GM10248 (cell line): ENCODE measurements at regions of chr17 and their contacts with region 1.

Region 1: GRCh38 chr17:7561028-7561575 is 617 bp upstream of the SENP3 start:
- DNase-seq: peak; percentile 90
- CTCF ChIP-seq: peak; percentile 86

Region 2: GRCh38 chr17:7363311-7363710 is 197.8 kb before region 1 on chr17:
- CTCF ChIA-PET with region 1: interaction called, 14 read pairs
- POLR2A ChIA-PET with region 1: no interaction called
- DNase-seq: no peak
- CTCF ChIP-seq: no peak

Region 3: GRCh38 chr17:7465597-7466275 is 95.4 kb before region 1 on chr17:
- CTCF ChIA-PET with region 1: no interaction called
- POLR2A ChIA-PET with region 1: no interaction called
- DNase-seq: no peak
- CTCF ChIP-seq: no peak

Region 4: GRCh38 chr17:7475764-7476422 is 85.2 kb before region 1 on chr17:
- CTCF ChIA-PET with region 1: interaction called, 11 read pairs
- POLR2A ChIA-PET with region 1: no interaction called
- DNase-seq: no peak
- CTCF ChIP-seq: no peak

Region 5: GRCh38 chr17:7509937-7510336 is 51.2 kb before region 1 on chr17:
- CTCF ChIA-PET with region 1: interaction called, 74 read pairs
- POLR2A ChIA-PET with region 1: no interaction called
- DNase-seq: no peak
- CTCF ChIP-seq: no peak

Region 6: DNA sequence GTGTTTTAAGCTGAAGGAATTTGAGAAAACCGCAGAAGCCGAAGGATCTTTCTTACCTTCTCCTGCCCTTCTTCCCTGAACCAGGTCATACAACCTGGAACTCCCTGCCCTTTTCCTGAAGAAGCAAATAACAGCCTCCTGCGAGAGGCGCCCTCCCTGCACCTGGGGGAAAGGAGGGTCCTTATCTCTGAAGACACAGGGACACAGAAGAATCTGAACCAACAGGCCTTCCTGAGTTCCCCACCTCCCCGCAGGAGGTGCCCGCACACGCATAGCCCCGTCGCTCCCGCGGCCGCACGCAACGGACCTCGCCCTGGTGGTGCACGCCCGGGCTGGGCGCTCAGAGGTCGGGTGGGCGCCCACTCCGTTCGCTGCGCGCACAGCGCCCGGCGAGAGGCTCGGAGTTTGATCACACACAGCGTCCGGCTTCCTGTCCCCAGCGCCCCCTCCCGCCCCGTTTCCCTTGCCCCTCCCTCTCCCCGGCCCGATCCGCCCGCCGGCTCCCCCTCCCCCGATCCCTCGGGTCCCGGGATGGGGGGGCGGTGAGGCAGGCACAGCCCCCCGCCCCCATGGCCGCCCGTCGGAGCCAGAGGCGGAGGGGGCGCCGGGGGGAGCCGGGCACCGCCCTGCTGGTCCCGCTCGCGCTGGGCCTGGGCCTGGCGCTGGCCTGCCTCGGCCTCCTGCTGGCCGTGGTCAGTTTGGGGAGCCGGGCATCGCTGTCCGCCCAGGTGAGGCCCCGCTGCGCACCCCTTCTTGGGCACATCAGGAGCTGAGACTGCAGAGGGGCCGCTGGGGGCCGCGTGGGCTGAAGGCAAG is 12.3 kb before region 1 on chr17 and contains the start of gene TNFSF12:
- CTCF ChIA-PET with region 1: interaction called, 43 read pairs
- POLR2A ChIA-PET with region 1: no interaction called
- DNase-seq: peak; percentile 76
- CTCF ChIP-seq: no peak

Region 7: DNA sequence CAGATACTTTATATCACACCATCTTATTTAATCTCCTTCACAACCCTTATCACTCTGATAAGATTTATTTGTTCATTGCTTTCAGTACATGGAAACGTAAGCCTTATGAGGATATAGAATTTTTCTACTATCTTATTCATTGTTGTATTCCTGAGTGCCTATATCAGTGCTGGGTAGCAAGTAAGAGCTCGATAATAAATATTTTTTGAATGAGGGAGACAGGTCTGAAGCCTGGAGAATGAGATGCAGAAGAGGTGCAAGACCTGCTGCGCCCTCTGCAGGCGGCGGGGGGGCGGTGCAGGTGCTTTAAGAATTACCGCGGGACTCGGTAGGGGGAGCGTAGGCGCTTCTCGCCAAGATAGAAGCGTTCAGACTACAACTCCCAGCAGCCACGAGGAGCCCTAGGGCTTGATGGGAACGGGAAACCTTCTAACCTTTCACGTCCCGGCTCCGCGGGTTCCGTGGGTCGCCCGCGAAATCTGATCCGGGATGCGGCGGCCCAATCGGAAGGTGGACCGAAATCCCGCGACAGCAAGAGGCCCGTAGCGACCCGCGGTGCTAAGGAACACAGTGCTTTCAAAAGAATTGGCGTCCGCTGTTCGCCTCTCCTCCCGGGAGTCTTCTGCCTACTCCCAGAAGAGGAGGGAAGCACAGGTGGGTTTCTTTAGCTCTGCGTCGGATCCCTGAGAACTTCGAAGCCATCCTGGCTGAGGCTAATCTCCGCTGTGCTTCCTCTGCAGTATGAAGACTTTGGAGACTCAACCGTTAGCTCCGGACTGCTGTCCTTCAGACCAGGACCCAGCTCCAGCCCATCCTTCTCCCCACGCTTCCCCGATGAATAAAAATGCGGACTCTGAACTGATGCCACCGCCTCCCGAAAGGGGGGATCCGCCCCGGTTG is 127.1 kb after region 1 on chr17 and contains the start of gene WRAP53:
- CTCF ChIA-PET with region 1: interaction called, 11 read pairs
- POLR2A ChIA-PET with region 1: interaction called, 3 read pairs
- DNase-seq: peak; percentile 96
- CTCF ChIP-seq: peak; percentile 99